ENCODE measurements at regions of chr9 and their contacts with region 1.

Region 1: GRCh38 chr9:134365791-134366688 is 39.8 kb downstream of the RXRA start:
- DNase-seq: peak; percentile 93
- H3K4me3 ChIP-seq: peak overlapping the region in 1 of 2 experiments; percentile 21; a peak in 3 of 4 replicates
- H3K27ac ChIP-seq: peak overlapping the region; percentile 81 to 98
- H3K4me1 ChIP-seq: peaks cover 39 to 78% of the 10 kb centered on the region in 2 experiments
- H3K27me3 ChIP-seq: no peaks in the 10 kb centered on the region
- CTCF ChIP-seq: 0 out of 2 replicates have a peak, but pooled peaks have one; percentile 8
- EP300 ChIP-seq: peak; percentile 33 to 71; a peak in 3 of 4 replicates
- RAD21 ChIP-seq: peak; percentile 42

Region 2: GRCh38 chr9:134344068-134344799 is 21.8 kb before region 1 on chr9:
- CTCF ChIA-PET with region 1: interaction called, 8 read pairs
- POLR2A ChIA-PET with region 1: interaction called, 11 read pairs
- DNase-seq: no peak
- H3K4me3 ChIP-seq: no peak overlapping the region
- H3K27ac ChIP-seq: no peak overlapping the region
- H3K4me1 ChIP-seq: peaks cover 0 to 77% of the 10 kb centered on the region in 2 experiments; a peak in 1 of 4 replicates
- H3K27me3 ChIP-seq: no peaks in the 10 kb centered on the region
- CTCF ChIP-seq: peak; percentile 13; the same call in 1 of the 2 replicates
- EP300 ChIP-seq: no peak
- RAD21 ChIP-seq: no peak

Region 3: DNA sequence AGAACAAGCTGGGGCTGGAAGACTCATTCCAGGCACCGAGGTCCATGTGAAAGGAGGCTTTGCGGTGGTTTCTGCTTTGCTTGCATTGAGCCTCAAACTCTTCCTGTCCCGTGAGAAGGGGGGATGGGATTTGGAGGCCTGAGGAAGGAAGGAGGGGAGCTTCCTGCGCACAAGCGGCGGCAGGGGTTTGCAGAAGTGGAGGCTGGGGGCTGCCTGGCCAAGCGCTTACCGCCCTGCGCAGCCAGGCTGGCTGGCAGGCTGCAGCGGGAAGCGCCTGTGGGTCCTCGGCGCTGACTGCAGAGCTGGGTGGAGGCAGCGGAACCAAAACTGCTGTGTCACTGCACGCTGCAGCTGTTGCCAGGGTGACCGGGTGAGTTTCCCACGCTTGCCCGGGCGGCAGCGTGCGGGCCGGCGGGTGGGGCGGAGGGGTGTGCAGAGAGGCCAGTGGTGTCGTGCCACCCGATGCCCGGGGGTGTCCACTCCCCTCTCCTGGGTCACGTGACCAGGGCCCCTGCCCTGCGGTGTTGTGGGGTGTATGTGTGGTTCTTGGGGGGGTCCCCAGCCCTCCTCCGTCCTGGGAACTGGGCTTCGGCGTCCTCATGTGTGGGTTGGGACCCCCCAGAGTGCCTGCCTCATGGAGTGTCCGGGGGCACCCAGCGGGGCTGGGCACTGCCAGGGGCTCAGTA is 41.2 kb after region 1 on chr9:
- CTCF ChIA-PET with region 1: interaction called, 11 read pairs
- POLR2A ChIA-PET with region 1: interaction called, 3 read pairs
- DNase-seq: peak; percentile 97
- H3K4me3 ChIP-seq: peak overlapping the region; percentile 37 to 44
- H3K27ac ChIP-seq: peak overlapping the region; percentile 70 to 95
- H3K4me1 ChIP-seq: peaks cover 27 to 44% of the 10 kb centered on the region in 2 experiments
- H3K27me3 ChIP-seq: no peaks in the 10 kb centered on the region
- CTCF ChIP-seq: no peak
- EP300 ChIP-seq: peak in 1 of 2 experiments; percentile 37; a peak in 1 of 4 replicates
- RAD21 ChIP-seq: no peak

Region 4: GRCh38 chr9:134422301-134423090 is 56.5 kb after region 1 on chr9:
- CTCF ChIA-PET with region 1: no interaction called
- POLR2A ChIA-PET with region 1: no interaction called
- DNase-seq: no peak
- H3K4me3 ChIP-seq: no peak overlapping the region
- H3K27ac ChIP-seq: no peak overlapping the region
- H3K4me1 ChIP-seq: peaks cover 0 to 6% of the 10 kb centered on the region in 2 experiments; a peak in 1 of 4 replicates
- H3K27me3 ChIP-seq: no peaks in the 10 kb centered on the region
- CTCF ChIP-seq: no peak
- EP300 ChIP-seq: no peak
- RAD21 ChIP-seq: no peak

Measured in SK-N-SH (cell line).